K562 (cell line): ENCODE measurements at regions of chr13 and their contacts with region 1.

Region 1: DNA sequence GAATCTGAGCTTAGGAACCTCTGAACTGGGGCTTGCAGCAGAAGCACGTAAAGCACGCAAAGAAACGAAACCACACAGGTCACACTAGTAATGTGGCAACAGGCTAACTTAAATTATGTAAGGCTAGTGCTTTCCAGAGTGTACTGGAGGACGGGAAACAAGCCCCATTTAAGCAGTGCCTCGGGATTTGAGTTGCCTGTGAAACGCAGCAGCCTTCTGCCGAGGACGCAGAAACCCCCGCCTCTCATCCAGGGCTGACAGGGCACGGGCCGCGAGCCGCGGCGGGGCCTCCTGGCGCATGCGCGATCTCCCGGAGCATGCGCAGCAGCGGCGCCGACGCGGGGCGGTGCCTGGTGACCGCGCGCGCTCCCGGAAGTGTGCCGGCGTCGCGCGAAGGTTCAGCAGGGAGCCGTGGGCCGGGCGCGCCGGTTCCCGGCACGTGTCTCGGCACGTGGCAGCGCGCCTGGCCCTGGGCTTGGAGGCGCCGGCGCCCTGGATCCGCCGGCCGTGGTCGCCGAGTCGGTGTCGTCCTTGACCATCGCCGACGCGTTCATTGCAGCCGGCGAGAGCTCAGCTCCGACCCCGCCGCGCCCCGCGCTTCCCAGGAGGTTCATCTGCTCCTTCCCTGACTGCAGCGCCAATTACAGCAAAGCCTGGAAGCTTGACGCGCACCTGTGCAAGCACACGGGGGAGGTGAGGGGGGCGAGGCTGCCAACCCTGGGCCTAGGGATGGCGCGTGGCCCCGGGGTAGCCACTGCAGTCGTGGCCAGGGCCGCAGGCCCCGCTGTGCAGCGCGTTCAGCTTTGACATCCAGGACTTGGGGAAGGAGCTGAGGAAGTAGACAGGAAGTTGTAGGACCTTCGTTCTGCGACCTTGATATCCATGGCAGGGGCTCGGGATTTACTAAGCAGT is at the start of gene GTF3A:
- DNase-seq: peak; percentile 87 to 92 (median 92)
- ATAC-seq: peak; percentile 78
- H3K4me3 ChIP-seq: peak within 1 kb of the TSS; percentile 65
- H3K27ac ChIP-seq: peak within 1 kb of the TSS; percentile 85
- H3K4me1 ChIP-seq: peaks cover 37 to 46% of the 10 kb centered on the region in 2 experiments
- H3K27me3 ChIP-seq: no peaks in the 10 kb centered on the region
- CTCF ChIP-seq: no peak
- EP300 ChIP-seq: no peak
- POLR2A ChIP-seq: peak; percentile 70
- RAD21 ChIP-seq: no peak
- polyA plus RNA-seq, gene GTF3A: 47.5 to 63.9 TPM

Region 2: GRCh38 chr13:26989957-26990713 is 434.4 kb before region 1 on chr13:
- CTCF ChIA-PET with region 1: no interaction called
- POLR2A ChIA-PET with region 1: no interaction called
- in situ Hi-C with region 1: no loop called
- intact Hi-C with region 1: no loop called
- DNase-seq: no peak
- ATAC-seq: no peak
- H3K4me3 ChIP-seq: no peak overlapping the region
- H3K27ac ChIP-seq: no peak overlapping the region
- H3K4me1 ChIP-seq: peaks cover 7 to 11% of the 10 kb centered on the region in 2 experiments; a peak in 4 of 5 replicates
- H3K27me3 ChIP-seq: peaks cover under 1 to 4% of the 10 kb centered on the region in 2 experiments; a peak in 3 of 5 replicates
- CTCF ChIP-seq: no peak
- EP300 ChIP-seq: no peak
- POLR2A ChIP-seq: no peak
- RAD21 ChIP-seq: no peak

Region 3: DNA sequence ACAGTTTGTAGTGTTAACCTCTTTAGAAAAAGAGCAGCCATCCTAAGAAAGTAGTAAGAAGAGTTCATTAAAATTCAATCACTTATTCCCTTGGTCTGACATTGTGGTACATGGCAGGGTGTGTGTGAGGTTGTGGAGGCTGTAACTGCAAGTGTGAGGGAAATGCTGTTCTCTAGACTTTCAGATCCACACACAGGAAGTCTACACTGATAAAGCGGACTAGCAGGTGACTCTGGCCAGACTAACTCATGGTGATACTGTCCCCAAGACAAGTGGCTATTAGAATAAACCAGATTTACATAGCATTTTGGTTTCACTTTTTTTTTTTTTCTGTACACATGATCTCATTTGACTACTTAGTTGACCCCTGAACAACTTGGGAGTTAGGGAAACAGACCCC is 15.9 kb after region 1 on chr13:
- CTCF ChIA-PET with region 1: no interaction called
- POLR2A ChIA-PET with region 1: interaction called, 12 read pairs
- in situ Hi-C with region 1: no loop called
- intact Hi-C with region 1: no loop called
- DNase-seq: no peak
- ATAC-seq: no peak
- H3K4me3 ChIP-seq: no peak overlapping the region
- H3K27ac ChIP-seq: no peak overlapping the region
- H3K4me1 ChIP-seq: peaks cover 0 to 2% of the 10 kb centered on the region in 2 experiments; a peak in 2 of 5 replicates
- H3K27me3 ChIP-seq: no peaks in the 10 kb centered on the region
- CTCF ChIP-seq: no peak
- EP300 ChIP-seq: no peak
- POLR2A ChIP-seq: no peak
- RAD21 ChIP-seq: no peak

Region 4: GRCh38 chr13:27449936-27450828 is 25.7 kb after region 1 on chr13 and contains the start of gene MTIF3:
- CTCF ChIA-PET with region 1: no interaction called
- POLR2A ChIA-PET with region 1: interaction called, 16 read pairs
- in situ Hi-C with region 1: no loop called
- intact Hi-C with region 1: loop called (anchors 2 kb)
- DNase-seq: peak; percentile 78 to 94 (median 85)
- ATAC-seq: peak; percentile 93
- H3K4me3 ChIP-seq: peak within 1 kb of the TSS; percentile 93
- H3K27ac ChIP-seq: peak within 1 kb of the TSS; percentile 97
- H3K4me1 ChIP-seq: peaks cover 3 to 10% of the 10 kb centered on the region in 2 experiments; a peak in 2 of 5 replicates
- H3K27me3 ChIP-seq: no peaks in the 10 kb centered on the region
- CTCF ChIP-seq: no peak
- EP300 ChIP-seq: no peak
- POLR2A ChIP-seq: peak; percentile 91
- RAD21 ChIP-seq: no peak
- polyA plus RNA-seq, gene MTIF3: 62.0 to 71.2 TPM